CD4-positive, alpha-beta T cell (primary cell): ENCODE measurements at regions of chr1 and their contacts with region 1.

Region 1: GRCh38 chr1:78004719-78005447 is at the start of gene DNAJB4:
- DNase-seq: peak; percentile 25 to 95 (median 48)
- ATAC-seq: peak; percentile 98
- H3K4me3 ChIP-seq: peak within 1 kb of the TSS; percentile 71
- H3K4me3 Mint-ChIP-seq: peak within 1 kb of the TSS; percentile 86
- H3K27ac ChIP-seq: peak within 1 kb of the TSS; percentile 78 to 96
- H3K27ac Mint-ChIP-seq: peak within 1 kb of the TSS; percentile 98
- H3K4me1 ChIP-seq: peaks cover 4% of the 10 kb centered on the region
- H3K4me1 Mint-ChIP-seq: peaks cover 54% of the 10 kb centered on the region
- H3K27me3 ChIP-seq: no peaks in the 10 kb centered on the region
- H3K27me3 Mint-ChIP-seq: no peaks in the 10 kb centered on the region
- CTCF ChIP-seq: no peak
- total RNA-seq, gene DNAJB4: 19.2 to 22.7 TPM

Region 2: GRCh38 chr1:76418531-76418930 is 1586.4 kb before region 1 on chr1:
- CTCF ChIA-PET with region 1: no interaction called
- POLR2A ChIA-PET with region 1: no interaction called
- intact Hi-C with region 1: no loop called
- DNase-seq: no peak
- ATAC-seq: no peak
- H3K4me3 ChIP-seq: no peak overlapping the region
- H3K4me3 Mint-ChIP-seq: no peak overlapping the region
- H3K27ac ChIP-seq: no peak overlapping the region
- H3K27ac Mint-ChIP-seq: no peak overlapping the region
- H3K4me1 ChIP-seq: no peaks in the 10 kb centered on the region
- H3K4me1 Mint-ChIP-seq: no peaks in the 10 kb centered on the region
- H3K27me3 ChIP-seq: no peaks in the 10 kb centered on the region
- H3K27me3 Mint-ChIP-seq: no peaks in the 10 kb centered on the region
- CTCF ChIP-seq: no peak

Region 3: DNA sequence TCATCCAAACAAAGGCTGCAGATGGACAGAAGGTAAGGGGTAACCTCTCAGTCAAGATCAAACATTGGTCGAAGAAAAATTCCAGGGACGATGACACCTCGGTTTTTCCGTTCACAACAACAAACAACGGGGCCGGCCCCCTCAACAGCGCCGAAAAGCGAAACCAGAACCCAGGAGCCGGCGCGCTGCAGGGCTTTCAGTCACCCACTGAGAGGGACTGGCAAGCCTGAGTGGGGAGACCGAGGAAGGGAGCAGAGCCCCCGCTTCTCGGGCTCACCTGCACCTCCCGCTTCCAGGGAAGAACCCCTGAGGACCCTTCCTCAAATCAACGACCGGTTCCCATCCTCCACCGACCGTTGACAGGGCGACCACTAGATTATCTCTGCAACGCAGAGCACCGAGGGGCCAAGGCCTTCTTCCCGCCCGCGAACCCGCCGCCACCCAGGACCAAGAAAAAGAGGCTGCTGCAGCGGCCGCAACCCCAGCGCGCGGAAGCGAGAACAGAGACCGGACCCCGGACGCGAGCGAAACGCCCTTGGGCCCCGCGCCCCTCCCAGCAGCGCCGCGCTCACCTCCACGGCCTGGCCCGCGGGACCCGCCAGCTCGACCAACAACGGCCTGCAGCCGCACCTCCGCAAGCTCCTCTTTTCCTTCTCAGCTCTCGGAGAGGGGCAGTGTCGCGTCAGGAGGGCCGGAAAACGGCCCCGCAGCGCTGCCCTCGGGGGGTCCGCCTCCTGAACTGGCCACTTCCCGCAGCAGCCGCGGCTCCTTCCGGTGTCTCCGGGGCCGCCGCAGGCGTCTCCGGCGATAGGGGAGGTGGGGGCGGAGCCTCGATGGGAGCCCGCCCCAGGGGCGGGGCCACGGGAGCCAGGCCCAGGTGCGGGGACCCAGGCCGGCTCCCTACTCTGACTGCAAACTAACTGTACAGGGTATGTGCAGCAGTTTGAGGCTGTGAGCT is 245.5 kb before region 1 on chr1 and contains the start of gene USP33:
- CTCF ChIA-PET with region 1: no interaction called
- POLR2A ChIA-PET with region 1: interaction called, 11 read pairs
- intact Hi-C with region 1: loop called in 1 of 2 experiments (anchors 10 kb)
- DNase-seq: peak; percentile 86 to 97 (median 92)
- ATAC-seq: peak; percentile 95
- H3K4me3 ChIP-seq: peak within 1 kb of the TSS; percentile 80
- H3K4me3 Mint-ChIP-seq: peak within 1 kb of the TSS; percentile 90
- H3K27ac ChIP-seq: peak within 1 kb of the TSS; percentile 29 to 88
- H3K27ac Mint-ChIP-seq: peak within 1 kb of the TSS; percentile 87
- H3K4me1 ChIP-seq: peaks cover 23% of the 10 kb centered on the region
- H3K4me1 Mint-ChIP-seq: peaks cover 57% of the 10 kb centered on the region
- H3K27me3 ChIP-seq: no peaks in the 10 kb centered on the region
- H3K27me3 Mint-ChIP-seq: no peaks in the 10 kb centered on the region
- CTCF ChIP-seq: no peak
- total RNA-seq, gene USP33: 69.7 to 71.6 TPM

Region 4: GRCh38 chr1:77817368-77818209 is 187.3 kb before region 1 on chr1:
- CTCF ChIA-PET with region 1: no interaction called
- POLR2A ChIA-PET with region 1: no interaction called
- intact Hi-C with region 1: no loop called
- DNase-seq: no peak
- ATAC-seq: no peak
- H3K4me3 ChIP-seq: no peak overlapping the region
- H3K4me3 Mint-ChIP-seq: no peak overlapping the region
- H3K27ac ChIP-seq: no peak overlapping the region
- H3K27ac Mint-ChIP-seq: no peak overlapping the region
- H3K4me1 ChIP-seq: no peaks in the 10 kb centered on the region
- H3K4me1 Mint-ChIP-seq: no peaks in the 10 kb centered on the region
- H3K27me3 ChIP-seq: no peaks in the 10 kb centered on the region
- H3K27me3 Mint-ChIP-seq: no peaks in the 10 kb centered on the region
- CTCF ChIP-seq: no peak

Region 5: GRCh38 chr1:77970192-77970591 is 34.7 kb before region 1 on chr1:
- CTCF ChIA-PET with region 1: no interaction called
- POLR2A ChIA-PET with region 1: interaction called, 419 read pairs
- intact Hi-C with region 1: loop called in 1 of 2 experiments (anchors 5 kb)
- DNase-seq: no peak
- ATAC-seq: no peak
- H3K4me3 ChIP-seq: no peak overlapping the region
- H3K4me3 Mint-ChIP-seq: no peak overlapping the region
- H3K27ac ChIP-seq: no peak overlapping the region
- H3K27ac Mint-ChIP-seq: no peak overlapping the region
- H3K4me1 ChIP-seq: peaks cover 24% of the 10 kb centered on the region
- H3K4me1 Mint-ChIP-seq: peaks cover 77% of the 10 kb centered on the region
- H3K27me3 ChIP-seq: no peaks in the 10 kb centered on the region
- H3K27me3 Mint-ChIP-seq: no peaks in the 10 kb centered on the region
- CTCF ChIP-seq: no peak

Region 6: GRCh38 chr1:77994117-77994705 is 10.7 kb before region 1 on chr1:
- CTCF ChIA-PET with region 1: interaction called, 3 read pairs
- POLR2A ChIA-PET with region 1: interaction called, 19 read pairs
- intact Hi-C with region 1: no loop called
- DNase-seq: no peak
- ATAC-seq: no peak
- H3K4me3 ChIP-seq: no peak overlapping the region
- H3K4me3 Mint-ChIP-seq: no peak overlapping the region
- H3K27ac ChIP-seq: no peak overlapping the region
- H3K27ac Mint-ChIP-seq: no peak overlapping the region
- H3K4me1 ChIP-seq: no peaks in the 10 kb centered on the region
- H3K4me1 Mint-ChIP-seq: peaks cover 5% of the 10 kb centered on the region
- H3K27me3 ChIP-seq: no peaks in the 10 kb centered on the region
- H3K27me3 Mint-ChIP-seq: no peaks in the 10 kb centered on the region
- CTCF ChIP-seq: no peak

Region 7: GRCh38 chr1:78649628-78650027 is 644.7 kb after region 1 on chr1 and contains the start of gene IFI44:
- CTCF ChIA-PET with region 1: no interaction called
- POLR2A ChIA-PET with region 1: interaction called, 5 read pairs
- intact Hi-C with region 1: loop called in 1 of 2 experiments (anchors 10 kb)
- DNase-seq: peak; percentile 59 to 90 (median 73)
- ATAC-seq: peak; percentile 81
- H3K4me3 ChIP-seq: peak within 1 kb of the TSS; percentile 65
- H3K4me3 Mint-ChIP-seq: peak within 1 kb of the TSS; percentile 92
- H3K27ac ChIP-seq: peak within 1 kb of the TSS; percentile 30 to 55
- H3K27ac Mint-ChIP-seq: peak within 1 kb of the TSS; percentile 80
- H3K4me1 ChIP-seq: peaks cover 30% of the 10 kb centered on the region
- H3K4me1 Mint-ChIP-seq: peaks cover 81% of the 10 kb centered on the region
- H3K27me3 ChIP-seq: no peaks in the 10 kb centered on the region
- H3K27me3 Mint-ChIP-seq: no peaks in the 10 kb centered on the region
- CTCF ChIP-seq: no peak
- total RNA-seq, gene IFI44: 67.4 to 70.0 TPM